Ovary (tissue), 10 donors: ENCODE measurements at regions of chr3 and their contacts with region 1.

Region 1: DNA sequence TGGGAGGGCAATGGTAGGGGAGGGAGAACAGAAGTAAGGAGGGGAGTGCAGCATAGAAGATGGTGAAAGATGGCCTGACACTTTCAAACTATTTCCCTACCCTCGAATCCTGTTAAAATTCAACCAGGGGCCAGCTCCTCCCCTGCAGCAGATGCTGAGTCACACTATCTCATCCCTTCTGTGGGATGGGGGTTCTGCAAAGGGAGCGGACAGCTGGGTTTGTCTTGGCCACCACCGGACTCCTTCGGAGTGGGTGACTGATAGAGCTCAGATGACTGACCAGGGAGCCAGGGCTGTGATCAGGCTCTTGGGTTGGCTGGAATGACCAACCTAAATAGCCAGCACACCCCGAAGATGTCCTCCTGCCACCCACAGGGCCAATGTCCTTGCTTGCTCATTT is 33.6 kb upstream of the TMCC1 start:
- DNase-seq: no peak
- H3K4me3 ChIP-seq: no peak overlapping the region
- H3K27ac ChIP-seq: no peak overlapping the region
- H3K4me1 ChIP-seq: no peaks in the 10 kb centered on the region
- H3K27me3 ChIP-seq: no peaks in the 10 kb centered on the region
- CTCF ChIP-seq: no peak
- EP300 ChIP-seq: no peak
- POLR2A ChIP-seq: no peak

Region 2: DNA sequence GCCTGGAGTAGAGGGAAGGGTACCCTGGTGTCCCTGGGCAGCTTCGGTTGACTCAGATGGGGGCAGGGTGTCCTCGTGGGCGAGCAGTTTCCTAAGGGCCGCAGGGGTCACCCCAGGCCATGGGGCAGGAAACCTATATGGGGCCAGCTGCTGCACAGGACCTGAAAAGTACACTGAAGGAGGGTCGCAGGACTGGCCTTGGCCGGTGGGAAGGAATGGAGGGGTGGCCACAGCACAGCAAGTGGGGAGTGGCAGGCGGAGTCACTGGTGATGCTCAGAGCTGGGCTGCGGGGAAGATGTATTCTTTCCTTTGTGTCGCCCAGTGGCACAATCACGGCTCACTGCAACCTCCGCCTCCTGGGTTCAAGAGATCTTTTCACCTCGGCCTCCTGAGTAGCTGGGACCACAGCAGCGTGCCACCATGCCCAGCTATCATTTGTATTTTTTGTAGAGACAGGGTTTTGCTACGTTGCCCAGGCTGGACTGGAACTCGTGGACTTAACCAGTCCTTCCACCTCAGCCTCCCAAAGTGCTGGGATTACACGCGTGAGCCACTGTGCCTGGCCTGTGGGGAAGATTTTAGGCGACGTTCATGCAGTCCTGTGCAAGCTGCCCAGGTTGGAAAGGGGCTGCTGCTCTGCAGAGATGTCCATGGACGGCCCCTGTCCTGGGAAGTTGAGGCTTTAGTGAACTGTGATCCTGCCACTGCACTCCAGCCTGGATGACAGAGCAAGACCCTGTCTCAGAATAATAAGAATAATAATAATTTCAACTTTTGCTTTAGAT is 555.8 kb before region 1 on chr3:
- intact Hi-C with region 1: loop called in 1 of 4 experiments (anchors 10 kb)
- DNase-seq: no peak
- H3K4me3 ChIP-seq: no peak overlapping the region
- H3K27ac ChIP-seq: no peak overlapping the region
- H3K4me1 ChIP-seq: no peaks in the 10 kb centered on the region
- H3K27me3 ChIP-seq: no peaks in the 10 kb centered on the region
- CTCF ChIP-seq: no peak
- EP300 ChIP-seq: no peak
- POLR2A ChIP-seq: no peak

Region 3: DNA sequence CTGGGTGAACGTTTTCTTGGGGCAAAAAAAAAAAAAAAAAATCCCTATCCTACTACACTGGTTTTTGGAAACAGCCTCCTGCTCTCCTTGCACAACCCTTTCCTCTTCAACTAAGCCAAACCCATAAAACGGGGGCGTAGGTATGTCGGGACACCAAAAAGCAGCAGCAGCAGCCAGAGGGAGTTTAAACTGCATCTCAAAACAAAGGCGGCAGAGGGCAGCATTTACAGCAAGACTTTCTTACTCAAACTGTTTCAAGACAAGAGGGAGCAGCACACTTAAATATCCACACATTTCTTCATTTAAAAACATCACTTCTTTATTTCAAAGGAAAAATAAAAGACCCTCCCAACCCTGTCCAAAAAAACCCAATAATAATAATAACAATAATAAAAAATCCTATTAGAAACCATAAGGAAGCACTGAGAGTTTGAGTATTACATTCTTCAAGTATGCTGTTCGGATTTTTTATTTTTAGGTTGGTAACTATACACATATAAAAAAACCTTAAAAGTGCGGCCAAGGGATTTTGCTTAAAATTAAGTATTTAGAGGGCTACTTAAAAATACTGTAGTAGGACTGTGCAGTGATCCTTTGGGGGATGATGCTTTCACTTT is 276.7 kb before region 1 on chr3:
- intact Hi-C with region 1: loop called in 3 of 4 experiments (anchors 5 to 10 kb)
- DNase-seq: peak; percentile 58 to 82 (median 72)
- H3K4me3 ChIP-seq: no peak overlapping the region
- H3K27ac ChIP-seq: no peak overlapping the region
- H3K4me1 ChIP-seq: peaks cover 1% of the 10 kb centered on the region
- H3K27me3 ChIP-seq: no peaks in the 10 kb centered on the region
- CTCF ChIP-seq: peak in 2 of 3 donors; percentile 67
- EP300 ChIP-seq: no peak
- POLR2A ChIP-seq: no peak

Region 4: DNA sequence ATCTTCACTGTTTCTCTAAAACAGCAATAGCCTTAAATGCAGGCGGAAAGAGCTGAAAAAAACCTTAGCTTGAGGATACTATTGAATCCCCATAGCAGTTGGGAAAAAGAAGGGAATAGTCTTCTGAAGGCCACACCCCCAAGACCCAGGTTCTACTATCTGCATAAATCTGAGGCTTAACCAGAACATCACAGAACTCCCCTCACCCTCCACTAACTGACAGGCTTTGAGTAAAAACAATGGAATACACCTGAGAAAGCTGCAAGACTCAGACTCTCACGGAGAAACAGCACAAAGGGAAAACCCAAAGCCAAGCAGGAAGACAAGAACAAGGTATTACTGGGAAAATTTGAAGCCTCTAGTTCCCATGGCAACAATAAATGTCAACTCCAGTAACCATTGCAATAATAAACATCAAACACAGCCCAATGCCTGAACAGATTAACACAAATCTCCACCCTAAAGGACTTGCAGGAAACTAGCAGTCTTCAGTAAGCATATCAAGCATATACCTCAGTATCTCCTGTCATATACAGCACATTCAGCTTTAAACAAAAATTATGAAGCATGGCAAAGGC is 89.9 kb before region 1 on chr3:
- intact Hi-C with region 1: loop called in 1 of 4 experiments (anchors 5 kb)
- DNase-seq: no peak
- H3K4me3 ChIP-seq: no peak overlapping the region
- H3K27ac ChIP-seq: no peak overlapping the region
- H3K4me1 ChIP-seq: no peaks in the 10 kb centered on the region
- H3K27me3 ChIP-seq: no peaks in the 10 kb centered on the region
- CTCF ChIP-seq: no peak
- EP300 ChIP-seq: no peak
- POLR2A ChIP-seq: no peak

Region 5: DNA sequence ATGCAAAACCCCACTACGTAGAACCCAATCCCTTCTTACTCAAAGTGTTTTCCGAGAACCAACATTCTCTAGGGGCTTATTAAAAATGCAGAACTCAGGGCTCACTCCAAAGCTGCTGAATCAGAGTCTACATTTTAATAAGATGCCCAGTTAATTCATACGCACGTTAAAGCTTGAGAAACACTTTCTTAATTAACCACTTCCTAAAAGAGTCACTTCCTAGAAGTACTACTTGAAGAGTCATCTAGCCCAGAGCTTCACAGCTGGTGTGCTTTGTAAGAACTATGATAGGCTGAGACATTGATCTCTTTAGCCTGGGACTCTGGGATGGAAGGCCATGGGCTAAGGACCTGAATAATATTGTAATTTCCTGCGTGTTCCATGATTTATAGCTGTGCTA is 427.4 kb after region 1 on chr3:
- intact Hi-C with region 1: no loop called
- DNase-seq: no peak
- H3K4me3 ChIP-seq: no peak overlapping the region
- H3K27ac ChIP-seq: no peak overlapping the region
- H3K4me1 ChIP-seq: no peaks in the 10 kb centered on the region
- H3K27me3 ChIP-seq: no peaks in the 10 kb centered on the region
- CTCF ChIP-seq: no peak
- EP300 ChIP-seq: no peak
- POLR2A ChIP-seq: no peak